ENCODE measurements at regions of chr16 and their contacts with region 1.

Region 1: GRCh38 chr16:29700253-29700987 is 21.4 kb downstream of the QPRT start:
- DNase-seq: peak; percentile 67 to 84 (median 72)
- H3K4me3 ChIP-seq: no peak overlapping the region
- H3K4me3 Mint-ChIP-seq: peak overlapping the region; percentile 75 to 92 (median 80)
- H3K27ac ChIP-seq: peak overlapping the region; percentile 41
- H3K27ac Mint-ChIP-seq: peak overlapping the region; percentile 91 to 99 (median 96)
- H3K4me1 ChIP-seq: peaks cover 34% of the 10 kb centered on the region
- H3K4me1 Mint-ChIP-seq: peaks cover 33 to 42% (median 40%) of the 10 kb centered on the region in 3 donors
- H3K27me3 ChIP-seq: no peaks in the 10 kb centered on the region
- H3K27me3 Mint-ChIP-seq: no peaks in the 10 kb centered on the region

Region 2: DNA sequence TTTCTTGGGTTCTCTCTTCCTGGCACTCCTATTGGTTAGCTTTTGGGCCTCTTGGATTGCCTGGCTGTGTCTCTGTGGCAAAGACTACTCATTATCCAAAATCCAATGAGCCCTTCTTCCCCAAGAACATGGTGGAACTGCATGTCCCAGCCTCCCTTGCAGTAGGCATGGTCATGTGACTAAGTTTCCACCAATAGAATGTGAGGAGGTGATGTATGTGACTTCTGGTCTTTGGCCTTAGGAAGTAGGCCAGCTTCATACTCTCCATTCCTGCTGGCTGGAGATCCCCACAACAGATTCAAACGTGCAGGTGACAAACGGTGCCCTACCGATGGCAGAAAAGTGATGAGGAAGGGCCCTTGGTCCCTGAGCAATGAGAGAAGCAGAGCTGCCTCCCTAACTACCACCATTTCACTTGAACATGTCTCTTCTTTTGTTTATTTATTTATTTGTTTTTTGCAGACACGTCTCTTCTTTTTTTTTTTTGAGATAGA is 54.7 kb before region 1 on chr16:
- CTCF ChIA-PET with region 1: no interaction called
- POLR2A ChIA-PET with region 1: no interaction called
- DNase-seq: peak in 1 of 5 donors; percentile 33
- H3K4me3 ChIP-seq: no peak overlapping the region
- H3K4me3 Mint-ChIP-seq: no peak overlapping the region
- H3K27ac ChIP-seq: no peak overlapping the region
- H3K27ac Mint-ChIP-seq: peak overlapping the region in 3 of 8 donors; percentile 1 to 46 (median 45)
- H3K4me1 ChIP-seq: peaks cover 19% of the 10 kb centered on the region
- H3K4me1 Mint-ChIP-seq: peaks cover 21 to 25% (median 24%) of the 10 kb centered on the region in 3 donors
- H3K27me3 ChIP-seq: no peaks in the 10 kb centered on the region
- H3K27me3 Mint-ChIP-seq: no peaks in the 10 kb centered on the region

Region 3: GRCh38 chr16:29710227-29711219 is 10.1 kb after region 1 on chr16:
- CTCF ChIA-PET with region 1: interaction called, 10 read pairs
- POLR2A ChIA-PET with region 1: interaction called, 5 read pairs
- DNase-seq: peak in 3 of 5 donors; percentile 57 to 65 (median 58)
- H3K4me3 ChIP-seq: no peak overlapping the region
- H3K4me3 Mint-ChIP-seq: no peak overlapping the region
- H3K27ac ChIP-seq: no peak overlapping the region
- H3K27ac Mint-ChIP-seq: peak overlapping the region in 6 of 8 donors; percentile 7 to 93 (median 84)
- H3K4me1 ChIP-seq: peaks cover 11% of the 10 kb centered on the region
- H3K4me1 Mint-ChIP-seq: peaks cover 12 to 17% (median 14%) of the 10 kb centered on the region in 3 donors
- H3K27me3 ChIP-seq: no peaks in the 10 kb centered on the region
- H3K27me3 Mint-ChIP-seq: peaks cover 0 to 1% of the 10 kb centered on the region in 2 donors

Region 4: DNA sequence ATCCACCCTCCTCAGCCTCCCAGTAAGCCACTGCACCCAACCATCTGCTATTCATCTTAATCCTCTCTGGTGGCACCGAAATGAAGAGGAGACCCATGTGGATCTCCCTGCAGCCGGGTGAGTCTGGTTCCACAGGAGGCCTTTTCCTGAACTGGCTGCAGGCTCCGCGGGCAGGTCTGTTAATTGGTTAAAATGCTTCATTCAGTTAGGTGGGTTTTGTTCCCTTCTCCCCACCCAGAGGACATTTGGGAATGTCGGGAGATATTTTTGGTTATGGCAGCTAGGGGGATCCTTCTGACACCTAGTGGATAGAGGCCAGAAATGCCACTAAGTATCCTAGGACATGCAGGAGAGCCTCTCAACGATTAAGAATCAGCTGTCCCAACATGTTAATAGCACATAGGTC is 28.7 kb after region 1 on chr16:
- CTCF ChIA-PET with region 1: interaction called, 10 read pairs
- POLR2A ChIA-PET with region 1: interaction called, 4 read pairs
- DNase-seq: no peak
- H3K4me3 ChIP-seq: no peak overlapping the region
- H3K4me3 Mint-ChIP-seq: peak overlapping the region in 1 of 7 donors; percentile 46
- H3K27ac ChIP-seq: no peak overlapping the region
- H3K27ac Mint-ChIP-seq: no peak overlapping the region
- H3K4me1 ChIP-seq: peaks cover 9% of the 10 kb centered on the region
- H3K4me1 Mint-ChIP-seq: peaks cover 19 to 30% (median 30%) of the 10 kb centered on the region in 3 donors
- H3K27me3 ChIP-seq: no peaks in the 10 kb centered on the region
- H3K27me3 Mint-ChIP-seq: peaks cover 0 to 1% of the 10 kb centered on the region in 2 donors

Region 5: DNA sequence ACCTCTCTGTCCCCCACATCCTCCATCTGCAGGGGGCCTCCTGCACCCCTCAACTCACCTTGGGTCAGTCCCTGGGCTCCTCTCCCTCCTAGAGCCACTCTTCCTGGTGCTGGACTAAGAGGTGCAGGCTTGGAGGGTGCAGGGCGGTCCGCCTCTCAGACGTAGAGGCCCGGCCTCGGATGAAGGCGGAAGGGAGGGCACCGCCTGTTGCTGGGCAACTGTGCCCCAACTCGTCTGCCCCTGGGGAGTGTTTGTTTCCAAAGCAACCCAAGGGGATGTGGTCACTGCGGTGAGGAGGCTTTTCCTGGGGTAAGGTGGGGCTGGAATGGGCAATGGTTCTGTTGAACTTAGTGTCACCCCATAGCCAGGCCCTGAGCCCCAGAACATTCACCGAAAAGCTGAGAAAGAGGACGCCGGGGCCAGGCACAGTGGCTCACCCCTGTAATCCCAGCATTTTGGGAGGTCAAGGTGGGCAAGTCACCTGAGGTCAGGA is 45.5 kb after region 1 on chr16 and contains the start of gene C16orf54:
- CTCF ChIA-PET with region 1: interaction called, 28 read pairs
- POLR2A ChIA-PET with region 1: interaction called, 10 read pairs
- DNase-seq: peak; percentile 89 to 99 (median 98)
- H3K4me3 ChIP-seq: peak within 1 kb of the TSS; percentile 86
- H3K4me3 Mint-ChIP-seq: peak within 1 kb of the TSS; percentile 96 to 100 (median 99)
- H3K27ac ChIP-seq: peak within 1 kb of the TSS; percentile 97
- H3K27ac Mint-ChIP-seq: peak within 1 kb of the TSS; percentile 98 to 100 (median 100)
- H3K4me1 ChIP-seq: peaks cover 65% of the 10 kb centered on the region
- H3K4me1 Mint-ChIP-seq: peaks cover 57 to 70% (median 61%) of the 10 kb centered on the region in 3 donors
- H3K27me3 ChIP-seq: no peaks in the 10 kb centered on the region
- H3K27me3 Mint-ChIP-seq: peaks cover 0 to 5% of the 10 kb centered on the region in 2 donors
- total RNA-seq, gene C16orf54: 32.3 to 33.3 TPM

Region 6: GRCh38 chr16:29790183-29790952 is 89.9 kb after region 1 on chr16 and contains the start of gene KIF22:
- CTCF ChIA-PET with region 1: interaction called, 53 read pairs
- POLR2A ChIA-PET with region 1: interaction called, 22 read pairs
- DNase-seq: peak; percentile 99 to 100 (median 100)
- H3K4me3 ChIP-seq: peak within 1 kb of the TSS; percentile 95
- H3K4me3 Mint-ChIP-seq: peak within 1 kb of the TSS; percentile 94 to 99 (median 99)
- H3K27ac ChIP-seq: peak within 1 kb of the TSS; percentile 85
- H3K27ac Mint-ChIP-seq: peak within 1 kb of the TSS; percentile 94 to 99 (median 98)
- H3K4me1 ChIP-seq: peaks cover 43% of the 10 kb centered on the region
- H3K4me1 Mint-ChIP-seq: peaks cover 40 to 61% (median 47%) of the 10 kb centered on the region in 3 donors
- H3K27me3 ChIP-seq: no peaks in the 10 kb centered on the region
- H3K27me3 Mint-ChIP-seq: peaks cover 0 to 4% of the 10 kb centered on the region in 2 donors
- total RNA-seq, gene KIF22: 118 to 131 TPM

Region 7: GRCh38 chr16:29815793-29816693 is 115.6 kb after region 1 on chr16 and contains the start of gene PAGR1:
- CTCF ChIA-PET with region 1: interaction called, 82 read pairs
- POLR2A ChIA-PET with region 1: interaction called, 29 read pairs
- DNase-seq: peak; percentile 95 to 99 (median 99)
- H3K4me3 ChIP-seq: peak within 1 kb of the TSS; percentile 94
- H3K4me3 Mint-ChIP-seq: peak within 1 kb of the TSS; percentile 89 to 99 (median 93)
- H3K27ac ChIP-seq: peak within 1 kb of the TSS; percentile 89
- H3K27ac Mint-ChIP-seq: peak within 1 kb of the TSS; percentile 93 to 99 (median 98)
- H3K4me1 ChIP-seq: peaks cover 54% of the 10 kb centered on the region
- H3K4me1 Mint-ChIP-seq: peaks cover 53 to 79% (median 62%) of the 10 kb centered on the region in 3 donors
- H3K27me3 ChIP-seq: no peaks in the 10 kb centered on the region
- H3K27me3 Mint-ChIP-seq: peaks cover 0 to 4% of the 10 kb centered on the region in 2 donors
- total RNA-seq, gene PAGR1: 41.9 to 44.3 TPM

Region 8: GRCh38 chr16:29915590-29916247 is 215.3 kb after region 1 on chr16:
- CTCF ChIA-PET with region 1: no interaction called
- POLR2A ChIA-PET with region 1: no interaction called
- DNase-seq: no peak
- H3K4me3 ChIP-seq: no peak overlapping the region
- H3K4me3 Mint-ChIP-seq: no peak overlapping the region
- H3K27ac ChIP-seq: no peak overlapping the region
- H3K27ac Mint-ChIP-seq: peak overlapping the region in 3 of 8 donors; percentile 7 to 95 (median 66)
- H3K4me1 ChIP-seq: no peaks in the 10 kb centered on the region
- H3K4me1 Mint-ChIP-seq: peaks cover 6 to 11% (median 7%) of the 10 kb centered on the region in 3 donors
- H3K27me3 ChIP-seq: no peaks in the 10 kb centered on the region
- H3K27me3 Mint-ChIP-seq: no peaks in the 10 kb centered on the region

Measured in CD8-positive, alpha-beta memory T cell (primary cell).